ENCODE measurements at regions of chr5 and their contacts with region 1.

Region 1: GRCh38 chr5:82165740-82166530 is 112.2 kb downstream of the RPS23 start:
- DNase-seq: peak in 11 of 14 experiments; percentile 2 to 78 (median 29)
- ATAC-seq: peak; percentile 100
- H3K4me3 ChIP-seq: no peak overlapping the region
- H3K4me3 Mint-ChIP-seq: no peak overlapping the region
- H3K27ac ChIP-seq: no peak overlapping the region
- H3K27ac Mint-ChIP-seq: peak overlapping the region; percentile 43
- H3K4me1 ChIP-seq: no peaks in the 10 kb centered on the region
- H3K4me1 Mint-ChIP-seq: peaks cover 12% of the 10 kb centered on the region
- H3K27me3 ChIP-seq: no peaks in the 10 kb centered on the region
- H3K27me3 Mint-ChIP-seq: no peaks in the 10 kb centered on the region
- CTCF ChIP-seq: peak; percentile 79

Region 2: GRCh38 chr5:81513982-81514381 is 652.0 kb before region 1 on chr5:
- CTCF ChIA-PET with region 1: no interaction called
- POLR2A ChIA-PET with region 1: interaction called, 5 read pairs
- intact Hi-C with region 1: loop called (anchors 2 kb)
- DNase-seq: peak in 3 of 14 experiments; percentile 16 to 43 (median 22)
- ATAC-seq: peak; percentile 48
- H3K4me3 ChIP-seq: no peak overlapping the region
- H3K4me3 Mint-ChIP-seq: no peak overlapping the region
- H3K27ac ChIP-seq: no peak overlapping the region
- H3K27ac Mint-ChIP-seq: no peak overlapping the region
- H3K4me1 ChIP-seq: no peaks in the 10 kb centered on the region
- H3K4me1 Mint-ChIP-seq: peaks cover 7% of the 10 kb centered on the region
- H3K27me3 ChIP-seq: no peaks in the 10 kb centered on the region
- H3K27me3 Mint-ChIP-seq: no peaks in the 10 kb centered on the region
- CTCF ChIP-seq: peak; percentile 61

Region 3: GRCh38 chr5:81909677-81910076 is 256.3 kb before region 1 on chr5:
- CTCF ChIA-PET with region 1: no interaction called
- POLR2A ChIA-PET with region 1: no interaction called
- intact Hi-C with region 1: no loop called
- DNase-seq: no peak
- ATAC-seq: no peak
- H3K4me3 ChIP-seq: no peak overlapping the region
- H3K4me3 Mint-ChIP-seq: no peak overlapping the region
- H3K27ac ChIP-seq: no peak overlapping the region
- H3K27ac Mint-ChIP-seq: no peak overlapping the region
- H3K4me1 ChIP-seq: no peaks in the 10 kb centered on the region
- H3K4me1 Mint-ChIP-seq: no peaks in the 10 kb centered on the region
- H3K27me3 ChIP-seq: no peaks in the 10 kb centered on the region
- H3K27me3 Mint-ChIP-seq: no peaks in the 10 kb centered on the region
- CTCF ChIP-seq: no peak